ENCODE measurements at regions of chr16 and their contacts with region 1.

Region 1: GRCh38 chr16:57576429-57576870 is 34.0 kb downstream of the ADGRG5 start:
- DNase-seq: peak; percentile 73
- H3K4me3 Mint-ChIP-seq: no peak overlapping the region
- H3K27ac Mint-ChIP-seq: no peak overlapping the region
- H3K4me1 Mint-ChIP-seq: no peaks in the 10 kb centered on the region
- H3K27me3 Mint-ChIP-seq: peaks cover 23% of the 10 kb centered on the region
- CTCF ChIP-seq: peak; percentile 97

Region 2: DNA sequence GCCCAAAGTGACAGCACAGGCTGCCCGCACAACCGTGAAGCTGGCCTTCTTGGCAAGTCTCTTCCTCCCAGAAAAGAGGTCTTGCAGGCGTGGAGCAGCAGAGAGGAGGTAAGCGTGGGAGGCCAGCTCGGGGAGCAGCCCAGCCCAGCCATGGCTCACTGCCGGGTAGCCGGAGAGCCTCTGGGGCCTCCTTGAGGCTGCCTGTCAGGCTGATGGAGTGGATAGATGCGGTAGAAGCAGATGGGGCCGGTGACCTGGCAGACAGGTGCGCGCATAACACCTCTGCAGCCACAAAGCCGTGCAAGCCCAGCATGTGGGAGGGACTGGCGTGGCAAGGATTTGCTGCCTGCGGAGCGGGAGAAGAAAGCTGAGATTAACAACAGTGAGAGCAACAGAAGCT is 73.1 kb before region 1 on chr16:
- CTCF ChIA-PET with region 1: no interaction called
- POLR2A ChIA-PET with region 1: no interaction called
- intact Hi-C with region 1: no loop called
- DNase-seq: no peak
- H3K4me3 Mint-ChIP-seq: no peak overlapping the region
- H3K27ac Mint-ChIP-seq: no peak overlapping the region
- H3K4me1 Mint-ChIP-seq: no peaks in the 10 kb centered on the region
- H3K27me3 Mint-ChIP-seq: peaks cover 16% of the 10 kb centered on the region
- CTCF ChIP-seq: no peak

Region 3: GRCh38 chr16:57564571-57565270 is 11.7 kb before region 1 on chr16:
- CTCF ChIA-PET with region 1: interaction called, 11 read pairs
- POLR2A ChIA-PET with region 1: interaction called, 3 read pairs
- intact Hi-C with region 1: no loop called
- DNase-seq: peak; percentile 32
- H3K4me3 Mint-ChIP-seq: no peak overlapping the region
- H3K27ac Mint-ChIP-seq: no peak overlapping the region
- H3K4me1 Mint-ChIP-seq: peaks cover 10% of the 10 kb centered on the region
- H3K27me3 Mint-ChIP-seq: peaks cover 38% of the 10 kb centered on the region
- CTCF ChIP-seq: no peak

Region 4: DNA sequence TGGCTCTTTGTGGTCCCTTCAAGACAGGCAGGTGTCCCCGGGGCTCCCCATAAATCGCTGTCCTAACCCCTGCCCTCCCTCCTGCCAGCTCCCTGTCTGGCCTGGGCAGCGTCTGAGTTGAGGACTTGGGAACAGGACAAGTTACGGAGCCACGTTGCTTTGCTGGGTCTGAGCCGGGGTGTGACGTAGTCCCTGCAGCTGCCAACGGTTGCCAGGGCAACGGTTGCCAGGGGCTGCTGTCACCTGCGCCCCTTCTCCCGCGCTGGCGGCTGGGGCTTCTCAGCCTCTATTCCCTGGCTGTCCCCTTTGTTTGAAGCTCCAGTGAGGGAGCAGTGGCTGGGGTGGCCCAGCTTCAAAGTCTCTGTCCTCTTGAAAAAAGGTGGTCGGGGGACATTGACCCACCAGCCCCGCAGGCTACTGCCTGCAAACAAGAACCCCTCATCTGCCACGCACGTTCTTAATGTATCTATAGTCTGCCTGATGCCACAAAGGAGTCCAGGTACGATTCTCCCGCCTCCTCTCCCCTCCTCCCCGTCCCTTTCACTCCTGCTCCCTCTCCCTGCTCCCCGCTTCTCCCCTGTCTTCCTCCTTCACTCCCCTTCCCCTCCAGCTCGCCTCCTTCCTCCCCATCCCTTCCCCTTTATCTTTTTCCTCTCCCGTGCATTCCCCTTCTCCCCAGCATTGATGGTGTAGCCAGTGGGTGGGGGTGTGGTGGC is 62.9 kb after region 1 on chr16:
- CTCF ChIA-PET with region 1: interaction called, 12 read pairs
- POLR2A ChIA-PET with region 1: interaction called, 3 read pairs
- intact Hi-C with region 1: no loop called
- DNase-seq: no peak
- H3K4me3 Mint-ChIP-seq: no peak overlapping the region
- H3K27ac Mint-ChIP-seq: no peak overlapping the region
- H3K4me1 Mint-ChIP-seq: peaks cover 13% of the 10 kb centered on the region
- H3K27me3 Mint-ChIP-seq: no peaks in the 10 kb centered on the region
- CTCF ChIP-seq: no peak

Region 5: DNA sequence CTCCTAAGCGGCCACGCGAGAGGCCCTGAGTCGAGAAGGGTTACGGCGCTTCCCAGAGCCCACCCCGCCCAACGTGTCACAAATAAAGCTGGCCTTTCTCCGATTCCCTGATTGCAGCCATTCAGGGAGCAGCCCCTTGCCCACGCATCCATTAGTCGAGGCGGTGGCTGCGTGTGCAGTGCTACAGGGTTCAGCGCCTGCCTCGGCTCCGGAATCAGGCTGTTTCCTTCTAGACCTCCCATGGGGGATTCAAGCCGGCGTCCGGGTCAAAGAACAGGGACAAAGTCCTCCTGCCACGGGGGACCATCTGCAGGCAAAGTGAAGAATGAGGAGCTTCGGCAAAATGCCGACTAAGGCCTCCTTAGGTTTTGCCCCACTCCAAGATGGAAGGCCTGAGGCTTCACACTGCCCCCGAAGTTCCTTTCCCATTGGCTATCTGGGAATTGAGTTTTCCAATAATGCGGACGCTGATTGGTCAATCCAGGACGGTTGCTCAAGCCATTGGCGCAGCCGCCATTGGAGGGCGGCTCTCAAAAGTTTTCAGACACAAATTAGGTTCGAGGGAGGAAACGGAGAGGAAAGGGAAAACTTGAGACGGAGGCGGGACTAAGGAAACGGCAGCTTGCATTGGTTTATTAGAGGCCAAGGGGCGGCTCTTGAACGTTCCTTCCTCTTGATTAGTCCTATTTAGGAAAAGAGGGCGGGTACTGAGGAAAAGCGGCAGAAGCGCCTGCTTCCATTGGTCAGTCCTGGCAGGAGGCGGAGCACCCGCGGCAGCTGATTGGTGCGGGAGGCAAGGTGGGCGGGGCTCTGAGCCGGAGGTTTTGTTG is 158.7 kb after region 1 on chr16:
- CTCF ChIA-PET with region 1: interaction called, 3 read pairs
- POLR2A ChIA-PET with region 1: no interaction called
- intact Hi-C with region 1: loop called (anchors 1 kb)
- DNase-seq: peak; percentile 100
- H3K4me3 Mint-ChIP-seq: peak overlapping the region; percentile 93
- H3K27ac Mint-ChIP-seq: peak overlapping the region; percentile 96
- H3K4me1 Mint-ChIP-seq: peaks cover 23% of the 10 kb centered on the region
- H3K27me3 Mint-ChIP-seq: no peaks in the 10 kb centered on the region
- CTCF ChIP-seq: no peak

Region 6: DNA sequence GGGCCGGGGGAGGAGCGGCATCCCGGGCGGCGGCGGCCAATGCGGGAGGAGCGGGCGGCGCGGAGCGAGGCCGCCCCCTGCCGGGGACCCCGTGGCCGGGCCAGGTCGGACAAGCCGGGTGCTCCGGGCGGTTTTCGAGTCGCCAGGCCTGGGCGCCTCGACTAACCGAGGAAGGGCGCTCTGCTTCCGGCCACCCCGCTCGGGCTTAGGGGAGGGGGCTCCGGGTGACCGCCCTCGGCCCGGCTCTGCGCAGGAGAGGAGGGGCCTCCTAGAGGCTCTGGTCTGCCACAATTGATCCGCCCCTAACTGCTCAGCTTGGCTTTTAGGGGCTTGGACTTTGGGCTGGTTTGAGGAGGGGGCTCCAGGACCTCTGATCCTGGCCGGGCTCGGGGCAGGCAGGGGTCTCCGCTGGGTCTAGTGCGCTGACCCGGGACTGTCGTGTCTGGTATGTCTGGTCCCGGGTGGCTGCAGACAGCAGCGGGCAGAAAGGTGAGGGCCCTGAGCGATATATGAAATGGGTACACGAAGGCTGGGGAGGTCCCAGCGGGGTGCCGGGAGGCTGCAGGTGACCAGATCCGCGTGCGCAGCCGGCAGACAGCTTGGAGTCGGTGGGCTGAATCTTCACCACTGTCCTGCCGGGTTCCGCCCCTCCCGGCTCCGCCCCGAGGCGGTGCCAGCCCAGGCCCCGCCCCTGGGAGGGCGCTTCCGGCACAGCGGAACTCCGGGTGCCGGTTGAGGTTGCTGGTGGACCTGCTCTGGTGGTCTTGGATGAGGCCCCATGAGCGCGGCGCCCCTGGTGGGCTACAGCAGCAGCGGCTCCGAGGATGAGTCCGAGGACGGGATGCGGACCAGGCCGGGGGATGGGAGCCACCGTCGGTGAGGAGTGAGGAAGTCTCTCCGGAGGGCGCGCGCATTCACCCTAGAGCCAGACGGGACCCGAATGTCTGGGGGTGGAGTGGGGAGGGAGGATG is 424.5 kb after region 1 on chr16 and contains the start of gene USB1:
- CTCF ChIA-PET with region 1: interaction called, 4 read pairs
- POLR2A ChIA-PET with region 1: no interaction called
- intact Hi-C with region 1: loop called (anchors 1 kb)
- DNase-seq: peak; percentile 82
- H3K4me3 Mint-ChIP-seq: peak within 1 kb of the TSS; percentile 86
- H3K27ac Mint-ChIP-seq: peak within 1 kb of the TSS; percentile 29
- H3K4me1 Mint-ChIP-seq: peaks cover 28% of the 10 kb centered on the region
- H3K27me3 Mint-ChIP-seq: no peaks in the 10 kb centered on the region
- CTCF ChIP-seq: peak; percentile 82
- total RNA-seq, gene USB1: 49.2 and 57.1 TPM in 2 replicates